CD4-positive, alpha-beta T cell (primary cell): ENCODE measurements at regions of chr19 and their contacts with region 1.

Region 1: GRCh38 chr19:56594783-56595547 is at the start of gene ZNF71:
- DNase-seq: peak; percentile 79 to 90 (median 84)
- ATAC-seq: peak; percentile 95
- H3K4me3 ChIP-seq: peak within 1 kb of the TSS; percentile 73
- H3K4me3 Mint-ChIP-seq: peak within 1 kb of the TSS; percentile 92
- H3K27ac ChIP-seq: peak within 1 kb of the TSS; percentile 43 to 62
- H3K27ac Mint-ChIP-seq: peak within 1 kb of the TSS; percentile 79
- H3K4me1 ChIP-seq: peaks cover 19% of the 10 kb centered on the region
- H3K4me1 Mint-ChIP-seq: peaks cover 24% of the 10 kb centered on the region
- H3K27me3 ChIP-seq: no peaks in the 10 kb centered on the region
- H3K27me3 Mint-ChIP-seq: no peaks in the 10 kb centered on the region
- CTCF ChIP-seq: no peak
- total RNA-seq, gene ZNF71: 2.2 TPM

Region 2: GRCh38 chr19:56140583-56141416 is 454.2 kb before region 1 on chr19 and contains the start of gene ZNF444:
- CTCF ChIA-PET with region 1: no interaction called
- POLR2A ChIA-PET with region 1: no interaction called
- intact Hi-C with region 1: loop called in 1 of 2 experiments (anchors 10 kb)
- DNase-seq: peak; percentile 98 to 100 (median 99)
- ATAC-seq: peak; percentile 83
- H3K4me3 ChIP-seq: peak within 1 kb of the TSS; percentile 70
- H3K4me3 Mint-ChIP-seq: peak within 1 kb of the TSS; percentile 96
- H3K27ac ChIP-seq: peak within 1 kb of the TSS; percentile 74 to 78
- H3K27ac Mint-ChIP-seq: peak within 1 kb of the TSS; percentile 85
- H3K4me1 ChIP-seq: peaks cover 35% of the 10 kb centered on the region
- H3K4me1 Mint-ChIP-seq: peaks cover 37% of the 10 kb centered on the region
- H3K27me3 ChIP-seq: no peaks in the 10 kb centered on the region
- H3K27me3 Mint-ChIP-seq: no peaks in the 10 kb centered on the region
- CTCF ChIP-seq: no peak
- total RNA-seq, gene ZNF444: 13.5 TPM

Region 3: GRCh38 chr19:56477429-56478338 is 117.3 kb before region 1 on chr19:
- CTCF ChIA-PET with region 1: no interaction called
- POLR2A ChIA-PET with region 1: no interaction called
- intact Hi-C with region 1: loop called in 1 of 2 experiments (anchors 5 kb)
- DNase-seq: peak; percentile 13 to 67 (median 46)
- ATAC-seq: peak; percentile 70
- H3K4me3 ChIP-seq: peak overlapping the region; percentile 29
- H3K4me3 Mint-ChIP-seq: peak overlapping the region; percentile 98
- H3K27ac ChIP-seq: peak overlapping the region in 1 of 2 donors; percentile 64
- H3K27ac Mint-ChIP-seq: peak overlapping the region; percentile 91
- H3K4me1 ChIP-seq: peaks cover 3% of the 10 kb centered on the region
- H3K4me1 Mint-ChIP-seq: peaks cover 18% of the 10 kb centered on the region
- H3K27me3 ChIP-seq: peaks cover 9 to 23% of the 10 kb centered on the region in 2 experiments
- H3K27me3 Mint-ChIP-seq: peaks cover 33% of the 10 kb centered on the region
- CTCF ChIP-seq: no peak

Region 4: DNA sequence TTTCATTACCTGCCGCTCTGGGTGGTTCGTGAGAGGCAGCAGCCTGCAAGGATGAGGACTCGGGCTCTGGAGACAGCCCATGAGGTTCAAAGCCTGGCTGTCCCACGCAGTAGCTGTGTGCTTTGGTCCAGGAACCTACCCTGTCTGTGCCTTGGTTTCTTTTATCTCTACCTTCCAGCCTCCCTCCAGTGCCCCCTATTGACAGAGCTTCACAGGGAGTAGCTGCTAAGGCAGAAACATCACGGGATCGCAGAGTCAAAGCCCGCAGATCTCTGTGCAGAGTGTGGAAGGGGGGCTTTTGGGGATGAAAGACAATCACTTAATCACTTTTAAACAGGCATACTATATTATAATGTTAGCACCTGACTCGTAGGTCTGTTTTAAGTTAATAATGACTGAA is 16.3 kb after region 1 on chr19:
- CTCF ChIA-PET with region 1: no interaction called
- POLR2A ChIA-PET with region 1: no interaction called
- intact Hi-C with region 1: no loop called
- DNase-seq: no peak
- ATAC-seq: no peak
- H3K4me3 ChIP-seq: no peak overlapping the region
- H3K4me3 Mint-ChIP-seq: no peak overlapping the region
- H3K27ac ChIP-seq: no peak overlapping the region
- H3K27ac Mint-ChIP-seq: no peak overlapping the region
- H3K4me1 ChIP-seq: no peaks in the 10 kb centered on the region
- H3K4me1 Mint-ChIP-seq: no peaks in the 10 kb centered on the region
- H3K27me3 ChIP-seq: no peaks in the 10 kb centered on the region
- H3K27me3 Mint-ChIP-seq: no peaks in the 10 kb centered on the region
- CTCF ChIP-seq: no peak

Region 5: GRCh38 chr19:56671613-56671994 is 76.6 kb after region 1 on chr19 and contains the start of gene ZNF835:
- CTCF ChIA-PET with region 1: no interaction called
- POLR2A ChIA-PET with region 1: no interaction called
- intact Hi-C with region 1: loop called in 1 of 2 experiments (anchors 2 kb)
- DNase-seq: peak; percentile 60 to 87 (median 77)
- ATAC-seq: peak; percentile 92
- H3K4me3 ChIP-seq: peak within 1 kb of the TSS; percentile 50
- H3K4me3 Mint-ChIP-seq: peak within 1 kb of the TSS; percentile 87
- H3K27ac ChIP-seq: peak within 1 kb of the TSS in 1 of 2 donors; percentile 25
- H3K27ac Mint-ChIP-seq: peak within 1 kb of the TSS; percentile 65
- H3K4me1 ChIP-seq: peaks cover 15% of the 10 kb centered on the region
- H3K4me1 Mint-ChIP-seq: peaks cover 14% of the 10 kb centered on the region
- H3K27me3 ChIP-seq: no peaks in the 10 kb centered on the region
- H3K27me3 Mint-ChIP-seq: no peaks in the 10 kb centered on the region
- CTCF ChIP-seq: no peak
- total RNA-seq, gene ZNF835: 0.82 to 1.1 TPM

Region 6: DNA sequence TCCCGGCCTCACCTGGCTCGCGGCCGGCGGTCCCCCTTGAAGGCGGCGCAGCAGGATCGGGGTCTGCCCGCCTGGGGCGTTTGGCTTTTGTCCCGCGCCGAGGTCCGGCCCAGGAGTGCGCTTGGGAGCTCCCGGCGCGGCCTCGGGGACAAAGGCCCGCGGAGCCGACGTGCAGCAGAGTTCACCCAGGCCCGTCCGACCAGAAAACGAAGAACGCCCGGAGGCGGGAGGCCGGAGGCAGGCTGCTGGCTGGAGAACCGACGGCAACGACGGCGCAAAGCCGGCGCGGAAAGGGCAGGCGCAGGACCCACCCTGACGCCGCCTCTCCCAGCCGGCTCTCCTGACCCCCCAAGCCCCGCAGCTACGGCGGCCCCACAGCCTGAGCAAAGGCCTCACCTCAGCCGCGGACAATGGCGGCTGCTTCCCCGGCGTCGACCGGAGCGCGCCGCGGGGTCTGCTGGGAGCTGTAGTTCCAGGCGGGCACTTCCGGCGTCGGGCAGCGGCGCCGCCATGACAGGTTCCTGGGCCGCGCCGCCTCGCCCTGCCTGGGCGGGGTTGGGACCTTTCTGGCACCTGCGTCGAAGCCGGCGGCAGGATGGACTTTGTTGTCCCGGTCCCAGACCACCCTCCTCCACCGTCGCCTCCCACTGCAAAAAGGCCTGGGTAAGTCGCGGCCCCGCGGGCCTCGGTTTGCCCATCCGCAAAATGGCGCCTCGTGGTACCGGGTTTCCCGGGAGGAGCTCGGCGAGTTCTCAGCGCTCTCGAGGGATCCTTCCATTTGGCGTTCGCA is 1407.6 kb after region 1 on chr19 and contains the start of gene ZNF606:
- CTCF ChIA-PET with region 1: no interaction called
- POLR2A ChIA-PET with region 1: no interaction called
- intact Hi-C with region 1: loop called in 1 of 2 experiments (anchors 5 kb)
- DNase-seq: peak; percentile 69 to 93 (median 81)
- ATAC-seq: peak; percentile 96
- H3K4me3 ChIP-seq: peak within 1 kb of the TSS; percentile 95
- H3K4me3 Mint-ChIP-seq: peak within 1 kb of the TSS; percentile 90
- H3K27ac ChIP-seq: peak within 1 kb of the TSS; percentile 71 to 87
- H3K27ac Mint-ChIP-seq: peak within 1 kb of the TSS; percentile 93
- H3K4me1 ChIP-seq: peaks cover 24% of the 10 kb centered on the region
- H3K4me1 Mint-ChIP-seq: peaks cover 23% of the 10 kb centered on the region
- H3K27me3 ChIP-seq: no peaks in the 10 kb centered on the region
- H3K27me3 Mint-ChIP-seq: no peaks in the 10 kb centered on the region
- CTCF ChIP-seq: no peak
- total RNA-seq, gene ZNF606: 11.1 to 13.6 TPM